ENCODE measurements at regions of chr2 and their contacts with region 1.

Region 1: DNA sequence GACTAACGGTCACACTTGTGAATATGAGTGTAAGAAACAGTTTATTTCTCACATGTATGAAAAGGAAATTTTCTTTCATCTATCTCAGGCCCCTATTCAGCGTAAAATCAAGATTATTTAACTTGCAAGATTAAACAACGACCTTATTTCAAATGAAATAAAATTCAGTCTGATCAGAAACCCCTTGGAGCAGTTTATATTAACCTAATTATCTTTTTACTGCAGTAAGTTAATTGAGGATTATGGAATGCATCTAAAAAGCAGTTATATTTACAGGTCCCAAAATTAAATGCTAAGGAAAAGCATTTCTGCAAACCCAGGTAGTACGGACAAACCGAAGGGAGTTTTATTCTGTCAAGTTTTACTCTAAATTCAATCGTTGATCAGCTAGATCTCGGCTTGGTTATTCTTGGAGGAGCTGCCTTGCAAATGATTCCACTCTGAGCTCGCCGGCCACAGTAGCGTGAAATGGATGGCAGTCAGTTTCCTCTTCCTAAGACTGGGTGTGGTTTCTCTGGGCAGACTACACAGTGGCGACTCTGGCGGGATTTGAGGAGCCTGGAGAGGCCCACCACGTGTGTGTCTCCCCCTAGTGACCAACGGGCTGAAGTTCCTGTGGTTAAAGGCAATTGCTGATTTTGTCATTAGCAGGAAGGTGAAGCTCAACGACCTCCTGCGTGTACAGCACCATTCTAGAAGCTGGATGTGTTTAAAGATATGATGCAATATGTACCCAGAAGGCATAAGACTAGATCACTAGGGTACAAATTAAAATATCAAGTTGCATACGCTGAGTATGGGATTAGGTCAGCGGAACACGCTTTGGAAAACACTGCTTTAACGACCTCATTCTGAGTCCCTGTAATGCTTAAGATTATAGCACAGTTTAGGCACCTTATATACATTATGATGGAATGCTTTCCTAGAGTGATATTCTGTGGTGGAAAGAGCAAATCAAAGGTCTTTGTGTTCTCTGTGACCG is 36.4 kb downstream of the PRKRA start:
- DNase-seq: peak; percentile 97
- H3K4me3 ChIP-seq: peak overlapping the region; percentile 62 to 68 (median 64)
- H3K27ac ChIP-seq: peak overlapping the region; percentile 87 to 95 (median 89)
- H3K4me1 ChIP-seq: peaks cover 4 to 21% (median 13%) of the 10 kb centered on the region in 4 donors
- H3K27me3 ChIP-seq: no peaks in the 10 kb centered on the region
- CTCF ChIP-seq: peak; percentile 90 to 94 (median 92)
- EP300 ChIP-seq: no peak
- POLR2A ChIP-seq: no peak

Region 2: DNA sequence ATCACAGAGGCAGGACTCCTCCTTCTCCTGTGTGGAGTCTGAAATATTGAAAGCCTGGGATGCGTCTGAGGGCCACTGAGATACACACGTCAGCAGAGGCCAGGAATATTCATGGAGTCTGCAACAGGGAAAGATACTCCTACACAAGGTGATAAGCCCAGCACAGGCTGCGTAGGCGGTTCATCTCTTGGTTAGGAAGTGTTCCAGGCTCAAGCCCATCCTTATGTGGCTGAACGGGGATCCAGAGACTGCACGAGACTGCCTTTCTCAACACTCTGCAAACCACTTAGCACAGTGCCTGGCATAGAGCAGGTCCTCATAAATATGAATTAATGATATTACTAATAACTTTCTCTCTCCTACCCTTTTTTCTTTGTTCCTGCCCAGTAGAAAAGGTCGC is 1051.2 kb before region 1 on chr2:
- intact Hi-C with region 1: no loop called
- DNase-seq: no peak
- H3K4me3 ChIP-seq: no peak overlapping the region
- H3K27ac ChIP-seq: no peak overlapping the region
- H3K4me1 ChIP-seq: peaks cover 0 to 16% (median 14%) of the 10 kb centered on the region in 4 donors
- H3K27me3 ChIP-seq: no peaks in the 10 kb centered on the region
- CTCF ChIP-seq: no peak
- EP300 ChIP-seq: no peak
- POLR2A ChIP-seq: no peak

Region 3: GRCh38 chr2:178112202-178113152 is 302.1 kb before region 1 on chr2 and contains the start of gene RBM45:
- intact Hi-C with region 1: loop called (anchors 5 kb)
- DNase-seq: peak; percentile 97
- H3K4me3 ChIP-seq: peak within 1 kb of the TSS; percentile 83 to 87 (median 86)
- H3K27ac ChIP-seq: peak within 1 kb of the TSS; percentile 79 to 86 (median 82)
- H3K4me1 ChIP-seq: peaks cover 7 to 21% (median 20%) of the 10 kb centered on the region in 4 donors
- H3K27me3 ChIP-seq: peaks cover 0 to 6% (median 0%) of the 10 kb centered on the region in 4 donors
- CTCF ChIP-seq: peak; percentile 91 to 98 (median 96)
- EP300 ChIP-seq: no peak
- POLR2A ChIP-seq: no peak
- total RNA-seq, gene RBM45: 5.6 to 13.7 (median 7.4) TPM

Region 4: DNA sequence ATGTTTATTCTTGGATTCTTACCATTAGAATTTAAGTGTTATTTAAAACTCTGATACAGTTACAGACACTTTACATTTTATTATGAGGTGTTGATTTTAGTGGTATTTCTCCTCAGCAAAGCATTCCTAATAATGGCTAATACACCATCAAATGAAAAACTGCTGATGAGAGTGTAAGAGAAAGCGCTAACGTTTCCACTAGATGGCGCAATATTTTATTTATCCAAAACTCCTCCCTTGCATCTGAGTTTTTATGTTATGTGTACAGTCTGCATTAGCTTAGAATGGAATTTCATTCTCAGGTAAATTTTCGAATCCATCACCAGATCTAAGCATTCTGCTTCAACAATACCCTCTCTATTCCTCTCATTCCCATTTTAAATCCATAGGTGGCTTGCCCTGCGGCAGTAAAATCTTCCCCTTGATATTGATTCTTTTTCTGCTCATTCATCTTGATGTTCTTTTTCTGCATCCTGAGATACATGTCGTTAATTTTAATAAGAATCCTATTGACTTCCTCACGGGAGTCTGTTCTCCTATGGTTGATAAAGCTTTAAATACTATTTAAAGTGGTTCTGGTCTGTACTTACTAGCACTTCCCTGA is 17.5 kb before region 1 on chr2:
- intact Hi-C with region 1: loop called (anchors 2 kb)
- DNase-seq: no peak
- H3K4me3 ChIP-seq: no peak overlapping the region
- H3K27ac ChIP-seq: no peak overlapping the region
- H3K4me1 ChIP-seq: no peaks in the 10 kb centered on the region
- H3K27me3 ChIP-seq: no peaks in the 10 kb centered on the region
- CTCF ChIP-seq: peak; percentile 60 to 72 (median 71)
- EP300 ChIP-seq: no peak
- POLR2A ChIP-seq: no peak

Region 5: DNA sequence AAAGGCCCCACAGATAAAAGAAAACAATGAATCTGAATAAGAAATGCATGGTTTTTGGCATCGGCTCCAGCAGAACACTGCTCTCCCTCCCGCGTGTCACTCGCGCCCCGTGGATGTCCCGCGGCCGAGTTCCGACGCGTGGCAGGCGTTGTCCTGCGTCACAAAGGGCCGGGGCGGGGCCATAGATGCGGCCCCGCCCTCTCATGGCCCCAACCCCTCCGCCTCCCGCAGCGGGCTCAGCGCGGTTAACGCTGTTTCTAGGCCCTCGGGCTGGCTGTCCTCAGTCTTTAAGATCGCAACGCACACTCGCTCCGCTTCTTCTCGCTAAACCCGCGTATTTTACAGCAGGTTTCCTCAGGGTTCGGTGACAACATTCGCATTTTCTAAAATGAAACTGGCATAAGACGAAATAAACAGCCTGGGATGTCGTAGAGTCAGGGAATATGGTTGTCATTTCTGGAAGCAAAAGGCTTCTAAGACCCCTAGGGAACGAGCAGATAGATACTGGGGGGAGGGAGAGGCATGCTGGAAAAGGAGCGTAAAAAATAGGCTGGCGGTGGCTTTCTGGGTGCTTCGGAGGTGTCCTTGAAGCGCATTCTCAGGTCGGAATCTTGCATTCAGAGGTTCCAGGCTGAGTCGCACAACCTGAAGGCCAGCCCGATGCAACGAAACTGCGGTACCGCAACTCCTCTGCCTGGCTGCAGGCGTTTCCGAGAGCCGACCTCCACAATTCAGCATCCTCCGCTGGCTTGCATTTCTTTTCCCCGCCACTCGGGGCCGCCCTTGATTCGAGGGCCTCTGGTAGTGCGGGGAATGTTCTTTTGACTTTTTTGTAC is 64.1 kb after region 1 on chr2 and contains the start of gene FKBP7:
- intact Hi-C with region 1: loop called (anchors 2 kb)
- DNase-seq: peak; percentile 93
- H3K4me3 ChIP-seq: peak within 1 kb of the TSS; percentile 66 to 84 (median 80)
- H3K27ac ChIP-seq: peak within 1 kb of the TSS; percentile 93 to 96 (median 96)
- H3K4me1 ChIP-seq: peaks cover 47 to 70% (median 60%) of the 10 kb centered on the region in 4 donors
- H3K27me3 ChIP-seq: no peaks in the 10 kb centered on the region
- CTCF ChIP-seq: peak; percentile 56 to 83 (median 62)
- EP300 ChIP-seq: peak; percentile 60
- POLR2A ChIP-seq: peak; percentile 8
- total RNA-seq, gene FKBP7: 13.3 to 15.0 (median 14.7) TPM

Region 6: GRCh38 chr2:178747767-178748166 is 333.2 kb after region 1 on chr2:
- intact Hi-C with region 1: no loop called
- DNase-seq: no peak
- H3K4me3 ChIP-seq: no peak overlapping the region
- H3K27ac ChIP-seq: no peak overlapping the region
- H3K4me1 ChIP-seq: peaks cover 0 to 4% (median 0%) of the 10 kb centered on the region in 4 donors
- H3K27me3 ChIP-seq: no peaks in the 10 kb centered on the region
- CTCF ChIP-seq: no peak
- EP300 ChIP-seq: no peak
- POLR2A ChIP-seq: no peak